Ascending aorta (tissue), 2 donors: ENCODE measurements at regions of chr5 and their contacts with region 1.

Region 1: DNA sequence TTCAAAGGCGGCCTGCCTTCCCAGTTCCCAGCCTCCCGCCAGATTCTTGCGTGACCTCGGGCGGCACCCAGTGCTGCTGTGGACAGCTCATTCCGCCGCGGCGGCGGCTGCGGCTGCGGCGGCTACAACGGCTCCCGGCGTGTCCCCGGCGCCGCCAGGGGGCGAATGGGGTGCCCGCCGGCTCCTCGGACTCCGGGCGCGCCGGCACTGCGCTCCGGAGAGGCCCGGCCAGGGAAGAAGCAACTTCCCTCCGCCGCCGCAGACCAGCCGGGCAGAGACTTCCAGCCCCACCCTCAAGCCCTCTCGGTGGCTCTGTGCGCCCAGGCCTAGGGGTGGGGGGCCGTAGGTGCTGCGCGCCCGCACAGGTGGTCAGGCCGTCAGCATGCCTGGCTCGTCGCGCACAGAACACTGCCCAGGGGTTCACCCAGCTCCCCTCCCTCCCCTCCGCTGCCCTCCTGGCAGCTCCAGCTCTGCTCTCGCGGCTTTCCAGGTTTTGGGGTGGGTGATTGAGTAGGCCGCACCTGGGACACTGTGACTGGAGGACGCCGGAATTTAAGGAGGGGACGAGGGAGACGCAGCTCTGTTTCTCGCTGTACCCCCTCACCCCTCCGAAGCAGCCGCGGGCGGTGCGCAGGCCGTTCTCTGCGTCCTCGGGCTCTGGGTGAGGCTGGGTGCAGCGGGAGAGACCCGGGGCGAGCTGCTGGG is 20.2 kb downstream of the IGIP start:
- DNase-seq: peak in 1 of 2 donors; percentile 80
- H3K4me3 ChIP-seq: peak overlapping the region; percentile 46 to 61
- H3K27ac ChIP-seq: no peak overlapping the region
- H3K4me1 ChIP-seq: peaks cover 11 to 14% of the 10 kb centered on the region in 2 donors
- H3K27me3 ChIP-seq: no peaks in the 10 kb centered on the region
- CTCF ChIP-seq: peak; percentile 50 to 88 (median 67)

Region 2: DNA sequence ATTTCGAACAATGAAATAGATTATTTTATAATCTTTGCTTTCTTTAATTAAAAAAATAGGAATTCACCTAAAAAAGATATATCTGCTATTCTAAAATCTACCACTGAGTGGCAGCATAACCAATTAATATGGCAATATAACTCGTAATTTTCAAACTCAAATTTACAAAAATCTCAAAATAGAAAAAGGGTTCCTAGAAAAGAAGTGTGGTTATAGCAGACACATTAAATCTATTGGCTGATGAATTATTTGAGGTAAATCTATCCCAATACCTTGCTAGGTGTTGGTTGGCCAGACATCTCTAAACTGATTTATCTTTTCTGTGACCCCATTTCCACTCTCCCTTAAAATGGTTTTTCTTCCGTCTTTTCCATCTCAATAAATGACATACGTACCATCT is 72.7 kb before region 1 on chr5:
- intact Hi-C with region 1: loop called (anchors 1 kb)
- DNase-seq: no peak
- H3K4me3 ChIP-seq: no peak overlapping the region
- H3K27ac ChIP-seq: no peak overlapping the region
- H3K4me1 ChIP-seq: no peaks in the 10 kb centered on the region
- H3K27me3 ChIP-seq: no peaks in the 10 kb centered on the region
- CTCF ChIP-seq: peak; percentile 52 to 67 (median 60)

Region 3: GRCh38 chr5:140107312-140108083 is 38.5 kb before region 1 on chr5:
- intact Hi-C with region 1: loop called (anchors 2 kb)
- DNase-seq: peak; percentile 46 to 94
- H3K4me3 ChIP-seq: peak overlapping the region; percentile 73 to 85
- H3K27ac ChIP-seq: peak overlapping the region; percentile 96 to 97
- H3K4me1 ChIP-seq: peaks cover 3 to 17% of the 10 kb centered on the region in 2 donors
- H3K27me3 ChIP-seq: no peaks in the 10 kb centered on the region
- CTCF ChIP-seq: peak in 2 of 3 experiments; percentile 25 to 37

Region 4: GRCh38 chr5:140113699-140114263 is 32.2 kb before region 1 on chr5 and contains the start of gene PURA:
- intact Hi-C with region 1: loop called (anchors 2 kb)
- DNase-seq: peak; percentile 87 to 97
- H3K4me3 ChIP-seq: peak within 1 kb of the TSS; percentile 70 to 77
- H3K27ac ChIP-seq: peak within 1 kb of the TSS; percentile 83 to 89
- H3K4me1 ChIP-seq: peaks cover 14 to 31% of the 10 kb centered on the region in 2 donors
- H3K27me3 ChIP-seq: no peaks in the 10 kb centered on the region
- CTCF ChIP-seq: no peak
- total RNA-seq, gene PURA: 11.5 TPM

Region 5: DNA sequence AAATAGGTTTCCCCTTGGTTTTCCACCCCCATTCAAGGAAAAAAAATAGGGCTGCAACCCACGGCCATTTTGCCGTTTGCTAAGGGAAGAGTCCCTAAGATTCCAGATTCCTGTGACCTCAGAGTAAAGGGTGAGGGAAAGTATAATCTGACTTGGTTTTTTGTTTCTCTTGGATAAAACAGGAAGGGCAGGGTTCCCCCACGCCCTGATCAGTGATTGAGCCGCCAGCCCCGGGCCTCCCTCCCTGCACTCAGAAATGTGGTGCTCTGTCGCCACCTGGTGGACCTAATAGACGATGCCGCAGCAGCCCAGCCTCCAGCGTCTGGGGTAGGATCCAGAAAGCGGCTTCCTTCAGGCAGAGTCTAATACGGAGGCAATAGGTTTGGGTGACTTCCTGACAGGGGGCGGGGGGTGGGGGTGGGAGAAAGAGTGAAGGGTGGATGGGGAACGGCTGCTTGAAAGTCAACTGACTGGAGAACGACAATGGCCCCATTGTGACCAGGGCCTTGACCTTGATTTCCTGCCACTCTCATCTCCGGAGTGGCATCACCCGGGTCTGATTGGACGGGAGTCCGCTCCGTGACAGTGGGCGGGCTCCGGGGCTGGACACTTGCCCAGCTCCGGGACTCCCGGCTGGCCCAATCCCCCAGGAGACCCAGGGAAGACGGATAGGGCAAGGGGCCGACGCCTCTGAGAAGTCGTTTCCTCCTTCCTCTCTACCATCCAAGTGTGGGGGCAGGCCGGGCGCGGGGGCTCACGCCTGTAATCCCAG is 11.2 kb after region 1 on chr5:
- intact Hi-C with region 1: loop called (anchors 1 kb)
- DNase-seq: peak; percentile 39 to 93
- H3K4me3 ChIP-seq: peak overlapping the region; percentile 47 to 51
- H3K27ac ChIP-seq: no peak overlapping the region
- H3K4me1 ChIP-seq: peaks cover 0 to 14% of the 10 kb centered on the region in 2 donors
- H3K27me3 ChIP-seq: peaks cover 3% of the 10 kb centered on the region
- CTCF ChIP-seq: peak; percentile 90 to 92 (median 91)